ENCODE measurements at regions of chr10 and their contacts with region 1.

Region 1: DNA sequence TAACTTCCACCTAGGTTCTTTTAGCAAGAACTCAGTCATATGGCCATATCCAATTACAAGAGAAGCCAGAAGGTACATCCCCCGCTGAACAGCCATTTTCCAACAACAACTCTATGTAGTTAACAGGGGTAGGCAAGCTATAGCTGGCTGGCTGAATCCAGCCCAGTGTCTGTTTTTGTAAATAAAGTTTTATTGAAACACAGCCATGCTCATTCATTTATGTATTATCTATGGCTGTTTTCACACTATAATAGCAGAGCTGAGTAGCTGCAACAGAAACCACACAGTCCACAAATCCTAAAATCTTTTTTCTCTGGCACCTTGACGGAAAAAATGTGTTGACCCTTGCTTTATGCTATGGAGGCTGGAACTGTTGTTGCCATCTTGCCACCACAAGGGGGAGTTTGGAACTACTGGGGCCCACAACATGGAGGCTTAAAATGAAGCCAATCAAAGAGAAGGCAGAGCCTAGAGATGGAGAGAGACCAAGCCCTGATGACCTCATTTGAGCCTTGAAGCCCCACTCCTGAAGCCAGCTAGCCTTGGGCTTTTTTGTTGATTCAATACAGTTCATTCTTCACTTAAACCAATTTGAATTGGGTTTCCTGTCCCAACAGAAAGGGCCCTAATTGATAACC is 33.3 kb upstream of the XPNPEP1 start:
- DNase-seq: peak; percentile 53 to 77 (median 62)
- ATAC-seq: peak; percentile 97
- H3K4me3 ChIP-seq: no peak overlapping the region
- H3K27ac ChIP-seq: no peak overlapping the region
- H3K4me1 ChIP-seq: no peaks in the 10 kb centered on the region
- H3K27me3 ChIP-seq: no peaks in the 10 kb centered on the region
- CTCF ChIP-seq: peak; percentile 64 to 70 (median 66)
- EP300 ChIP-seq: no peak
- POLR2A ChIP-seq: no peak
- RAD21 ChIP-seq: peak; percentile 50 to 71

Region 2: GRCh38 chr10:109835257-109835656 is 121.3 kb before region 1 on chr10:
- CTCF ChIA-PET with region 1: no interaction called
- POLR2A ChIA-PET with region 1: no interaction called
- in situ Hi-C with region 1: no loop called
- intact Hi-C with region 1: no loop called
- DNase-seq: no peak
- ATAC-seq: no peak
- H3K4me3 ChIP-seq: no peak overlapping the region
- H3K27ac ChIP-seq: no peak overlapping the region
- H3K4me1 ChIP-seq: no peaks in the 10 kb centered on the region
- H3K27me3 ChIP-seq: no peaks in the 10 kb centered on the region
- CTCF ChIP-seq: no peak
- EP300 ChIP-seq: no peak
- POLR2A ChIP-seq: no peak
- RAD21 ChIP-seq: no peak

Region 3: GRCh38 chr10:110016039-110016438 is 59.5 kb after region 1 on chr10:
- CTCF ChIA-PET with region 1: no interaction called
- POLR2A ChIA-PET with region 1: no interaction called
- in situ Hi-C with region 1: no loop called
- intact Hi-C with region 1: loop called (anchors 10 kb)
- DNase-seq: no peak
- ATAC-seq: peak; percentile 71
- H3K4me3 ChIP-seq: no peak overlapping the region
- H3K27ac ChIP-seq: no peak overlapping the region
- H3K4me1 ChIP-seq: peaks cover 3 to 6% of the 10 kb centered on the region in 2 experiments; a peak in 4 of 5 replicates
- H3K27me3 ChIP-seq: no peaks in the 10 kb centered on the region
- CTCF ChIP-seq: peak; percentile 24 to 53 (median 37); a peak in 4 of 6 replicates
- EP300 ChIP-seq: no peak
- POLR2A ChIP-seq: no peak
- RAD21 ChIP-seq: peak; percentile 23 to 68; a peak in 3 of 4 replicates

Region 4: GRCh38 chr10:110162741-110163145 is 206.2 kb after region 1 on chr10:
- CTCF ChIA-PET with region 1: no interaction called
- POLR2A ChIA-PET with region 1: no interaction called
- in situ Hi-C with region 1: no loop called
- intact Hi-C with region 1: no loop called
- DNase-seq: no peak
- ATAC-seq: no peak
- H3K4me3 ChIP-seq: no peak overlapping the region
- H3K27ac ChIP-seq: no peak overlapping the region
- H3K4me1 ChIP-seq: no peaks in the 10 kb centered on the region; a peak in 1 of 5 replicates
- H3K27me3 ChIP-seq: peaks cover 3 to 36% of the 10 kb centered on the region in 2 experiments; a peak in 4 of 5 replicates
- CTCF ChIP-seq: no peak
- EP300 ChIP-seq: no peak
- POLR2A ChIP-seq: no peak
- RAD21 ChIP-seq: no peak

Measured in K562 (cell line).